CD4-positive, alpha-beta memory T cell (primary cell): ENCODE measurements at regions of chr9 and their contacts with region 1.

Region 1: GRCh38 chr9:133992780-133993634 is 883 bp upstream of the VAV2 start:
- DNase-seq: peak; percentile 58 to 67 (median 60)
- H3K4me3 ChIP-seq: peak overlapping the region; percentile 47 to 58
- H3K4me3 Mint-ChIP-seq: peak overlapping the region; percentile 73 to 83 (median 80)
- H3K27ac ChIP-seq: no peak overlapping the region
- H3K27ac Mint-ChIP-seq: peak overlapping the region in 1 of 7 donors; percentile 35
- H3K4me1 ChIP-seq: peaks cover 16% of the 10 kb centered on the region
- H3K4me1 Mint-ChIP-seq: peaks cover 1 to 16% (median 5%) of the 10 kb centered on the region in 4 donors
- H3K27me3 ChIP-seq: no peaks in the 10 kb centered on the region
- H3K27me3 Mint-ChIP-seq: peaks cover 0 to 6% of the 10 kb centered on the region in 2 donors

Region 2: DNA sequence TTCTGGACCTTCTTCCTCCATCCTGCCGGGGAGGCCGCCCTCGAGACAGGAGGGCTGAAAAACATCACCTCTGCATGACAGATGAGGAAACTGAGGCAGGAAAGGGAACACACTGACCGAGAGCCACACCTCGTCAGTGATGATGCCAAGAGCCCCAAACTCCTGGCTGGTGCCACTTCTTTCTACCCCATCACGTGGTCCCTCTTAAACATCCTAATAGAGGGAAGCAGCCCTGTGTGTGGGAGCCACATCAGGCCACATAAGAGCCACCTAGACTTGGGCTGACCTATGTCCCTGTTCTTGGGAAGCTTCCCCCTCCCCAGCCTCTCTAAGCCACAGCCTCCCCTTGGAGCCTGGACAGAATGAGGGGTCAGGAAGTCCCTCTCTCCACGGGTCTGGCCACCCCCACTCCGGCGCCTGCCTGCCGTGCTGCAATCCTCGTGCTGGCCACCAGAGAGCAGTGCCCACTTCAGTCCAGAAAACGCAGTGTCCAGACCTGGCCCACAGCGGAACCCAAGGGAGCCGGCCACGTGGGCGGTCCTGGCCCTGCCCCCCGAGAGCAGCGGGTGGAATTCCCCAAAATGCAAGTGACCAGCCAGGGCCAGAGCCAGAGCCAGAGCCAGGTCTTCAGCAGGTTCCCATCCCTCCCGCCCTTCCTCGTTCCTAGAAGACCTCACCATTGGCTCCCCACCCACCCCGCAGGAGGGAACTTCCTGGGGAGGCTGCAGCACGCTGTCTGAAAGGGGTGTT is 200.1 kb before region 1 on chr9:
- CTCF ChIA-PET with region 1: interaction called, 65 read pairs
- POLR2A ChIA-PET with region 1: interaction called, 4 read pairs
- intact Hi-C with region 1: no loop called
- DNase-seq: peak in 4 of 5 donors; percentile 22 to 41 (median 30)
- H3K4me3 ChIP-seq: no peak overlapping the region
- H3K4me3 Mint-ChIP-seq: peak overlapping the region in 1 of 8 donors; percentile 16
- H3K27ac ChIP-seq: no peak overlapping the region
- H3K27ac Mint-ChIP-seq: no peak overlapping the region
- H3K4me1 ChIP-seq: peaks cover 5% of the 10 kb centered on the region
- H3K4me1 Mint-ChIP-seq: peaks cover 0 to 10% (median 4%) of the 10 kb centered on the region in 4 donors
- H3K27me3 ChIP-seq: no peaks in the 10 kb centered on the region
- H3K27me3 Mint-ChIP-seq: peaks cover 1 to 5% of the 10 kb centered on the region in 2 donors

Region 3: DNA sequence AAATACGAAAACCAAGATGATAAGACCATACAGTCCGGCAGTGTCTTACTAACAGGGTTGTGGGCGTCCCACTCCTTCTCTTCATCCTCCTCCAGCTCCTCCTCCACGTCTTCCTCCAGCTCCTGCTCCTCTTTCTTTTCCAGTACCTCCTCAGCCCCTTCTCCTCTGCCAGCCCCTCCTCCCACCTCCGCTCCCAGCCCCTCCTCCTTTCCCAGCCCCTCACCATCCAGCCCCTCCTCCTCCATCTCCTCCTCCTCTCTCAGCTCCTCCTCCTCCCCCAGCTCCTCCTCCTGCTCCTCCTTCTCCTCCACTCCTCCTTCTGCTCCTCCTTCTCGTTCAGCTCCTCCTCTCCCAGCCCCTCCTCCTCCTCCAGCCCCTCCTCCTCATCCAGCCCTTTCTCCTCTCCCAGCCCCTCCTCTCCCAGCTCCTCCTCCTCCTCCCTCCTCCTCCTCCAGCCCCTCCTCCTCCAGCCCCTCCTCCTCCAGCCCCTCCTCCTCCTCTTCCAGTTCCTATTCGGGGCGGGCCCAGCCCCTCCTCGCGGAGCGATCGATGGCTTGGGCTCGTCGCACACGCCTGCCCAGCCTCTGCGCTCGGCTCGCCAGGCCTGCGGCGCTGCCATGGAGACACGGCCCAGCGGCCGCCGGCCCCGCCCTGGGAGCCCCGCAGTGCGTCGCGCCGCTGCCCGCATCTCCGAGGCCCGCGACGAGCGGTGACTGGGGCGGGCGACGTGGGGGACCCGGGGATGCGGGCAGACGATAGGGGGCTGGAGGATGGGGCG is 32.0 kb after region 1 on chr9 and contains the start of gene BRD3OS:
- CTCF ChIA-PET with region 1: interaction called, 10 read pairs
- POLR2A ChIA-PET with region 1: interaction called, 3 read pairs
- intact Hi-C with region 1: loop called (anchors 1 kb)
- DNase-seq: peak; percentile 89 to 96 (median 93)
- H3K4me3 ChIP-seq: peak within 1 kb of the TSS; percentile 36 to 89
- H3K4me3 Mint-ChIP-seq: peak within 1 kb of the TSS; percentile 78 to 86 (median 82)
- H3K27ac ChIP-seq: peak within 1 kb of the TSS; percentile 68
- H3K27ac Mint-ChIP-seq: peak within 1 kb of the TSS; percentile 45 to 90 (median 85)
- H3K4me1 ChIP-seq: peaks cover 14% of the 10 kb centered on the region
- H3K4me1 Mint-ChIP-seq: peaks cover 3 to 22% (median 7%) of the 10 kb centered on the region in 4 donors
- H3K27me3 ChIP-seq: no peaks in the 10 kb centered on the region
- H3K27me3 Mint-ChIP-seq: no peaks in the 10 kb centered on the region
- total RNA-seq, gene BRD3OS: 18.3 to 21.5 TPM